ENCODE measurements at regions of chr5 and their contacts with region 1.

Region 1: GRCh38 chr5:42950440-42951292 is 89.5 kb downstream of the ANXA2R start:
- DNase-seq: peak; percentile 73
- ATAC-seq: peak; percentile 38
- H3K4me3 Mint-ChIP-seq: peak overlapping the region; percentile 96
- H3K27ac Mint-ChIP-seq: peak overlapping the region; percentile 100
- H3K4me1 Mint-ChIP-seq: peaks cover 43% of the 10 kb centered on the region
- H3K27me3 Mint-ChIP-seq: no peaks in the 10 kb centered on the region

Region 2: GRCh38 chr5:42779083-42779482 is 171.6 kb before region 1 on chr5:
- CTCF ChIA-PET with region 1: no interaction called
- POLR2A ChIA-PET with region 1: no interaction called
- DNase-seq: no peak
- ATAC-seq: no peak
- H3K4me3 Mint-ChIP-seq: no peak overlapping the region
- H3K27ac Mint-ChIP-seq: no peak overlapping the region
- H3K4me1 Mint-ChIP-seq: no peaks in the 10 kb centered on the region
- H3K27me3 Mint-ChIP-seq: peaks cover 2% of the 10 kb centered on the region

Region 3: GRCh38 chr5:42970636-42971559 is 20.2 kb after region 1 on chr5:
- CTCF ChIA-PET with region 1: no interaction called
- POLR2A ChIA-PET with region 1: interaction called, 10 read pairs
- DNase-seq: no peak
- ATAC-seq: no peak
- H3K4me3 Mint-ChIP-seq: no peak overlapping the region
- H3K27ac Mint-ChIP-seq: no peak overlapping the region
- H3K4me1 Mint-ChIP-seq: peaks cover 10% of the 10 kb centered on the region
- H3K27me3 Mint-ChIP-seq: no peaks in the 10 kb centered on the region

Region 4: GRCh38 chr5:42994246-42995151 is 43.8 kb after region 1 on chr5:
- CTCF ChIA-PET with region 1: interaction called, 85 read pairs
- POLR2A ChIA-PET with region 1: interaction called, 288 read pairs
- DNase-seq: peak; percentile 94
- ATAC-seq: peak; percentile 60
- H3K4me3 Mint-ChIP-seq: peak overlapping the region; percentile 94
- H3K27ac Mint-ChIP-seq: peak overlapping the region; percentile 99
- H3K4me1 Mint-ChIP-seq: peaks cover 19% of the 10 kb centered on the region
- H3K27me3 Mint-ChIP-seq: no peaks in the 10 kb centered on the region

Region 5: GRCh38 chr5:43008369-43009153 is 57.9 kb after region 1 on chr5:
- CTCF ChIA-PET with region 1: interaction called, 7 read pairs
- POLR2A ChIA-PET with region 1: interaction called, 80 read pairs
- DNase-seq: peak; percentile 94
- ATAC-seq: peak; percentile 71
- H3K4me3 Mint-ChIP-seq: peak overlapping the region; percentile 90
- H3K27ac Mint-ChIP-seq: peak overlapping the region; percentile 98
- H3K4me1 Mint-ChIP-seq: peaks cover 44% of the 10 kb centered on the region
- H3K27me3 Mint-ChIP-seq: peaks cover 1% of the 10 kb centered on the region

Region 6: GRCh38 chr5:43019614-43020293 is 69.1 kb after region 1 on chr5:
- CTCF ChIA-PET with region 1: interaction called, 23 read pairs
- POLR2A ChIA-PET with region 1: interaction called, 103 read pairs
- DNase-seq: peak; percentile 94
- ATAC-seq: peak; percentile 73
- H3K4me3 Mint-ChIP-seq: peak overlapping the region; percentile 95
- H3K27ac Mint-ChIP-seq: peak overlapping the region; percentile 99
- H3K4me1 Mint-ChIP-seq: peaks cover 36% of the 10 kb centered on the region
- H3K27me3 Mint-ChIP-seq: no peaks in the 10 kb centered on the region

Region 7: DNA sequence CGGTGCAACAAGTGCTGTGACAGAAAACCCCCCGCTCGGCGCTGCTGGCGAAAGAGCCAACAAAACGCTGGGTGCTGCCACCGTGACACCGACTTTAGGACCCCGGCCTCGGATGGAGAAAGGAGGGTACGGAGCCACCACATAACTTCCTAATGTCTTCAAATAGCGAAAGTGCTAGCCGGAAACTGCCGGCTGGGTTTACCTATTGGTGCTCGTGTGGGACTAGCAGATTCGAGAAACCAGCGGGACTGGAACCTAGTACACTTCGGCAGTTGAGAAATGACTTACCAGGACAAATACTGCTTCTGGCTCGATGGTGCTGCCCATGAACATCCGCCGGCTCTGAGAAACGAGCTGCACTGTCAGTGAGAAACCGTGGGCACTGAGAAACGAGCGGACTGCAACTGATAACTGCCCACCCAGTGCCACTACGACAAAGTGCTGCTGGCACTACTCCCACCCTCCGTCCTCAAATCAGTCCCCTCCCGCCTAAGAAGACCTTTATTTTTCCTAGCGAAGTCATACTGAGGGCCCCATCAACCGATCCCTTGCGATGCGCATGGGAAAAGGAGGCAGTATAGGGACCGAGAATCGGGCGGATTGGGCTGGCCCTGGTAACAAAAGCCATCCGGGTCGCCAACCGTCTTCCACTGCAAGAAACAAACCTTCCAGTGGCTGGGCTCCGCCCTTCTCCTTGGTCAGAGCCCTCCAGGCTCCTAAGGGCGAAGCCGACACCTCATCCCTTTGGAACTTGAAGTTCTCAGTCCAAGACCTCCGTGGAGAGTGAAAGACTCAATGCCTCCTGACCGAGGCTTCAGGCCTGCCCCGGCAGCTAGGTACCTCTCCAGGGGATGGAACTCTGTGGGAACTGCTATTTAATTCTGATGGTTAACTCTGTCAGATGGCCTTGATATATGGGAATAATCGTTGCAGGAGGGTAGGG is 116.4 kb after region 1 on chr5:
- CTCF ChIA-PET with region 1: interaction called, 7 read pairs
- POLR2A ChIA-PET with region 1: interaction called, 31 read pairs
- DNase-seq: peak; percentile 91
- ATAC-seq: peak; percentile 59
- H3K4me3 Mint-ChIP-seq: peak overlapping the region; percentile 94
- H3K27ac Mint-ChIP-seq: peak overlapping the region; percentile 99
- H3K4me1 Mint-ChIP-seq: peaks cover 43% of the 10 kb centered on the region
- H3K27me3 Mint-ChIP-seq: no peaks in the 10 kb centered on the region